CD4-positive, alpha-beta T cell (primary cell): ENCODE measurements at regions of chr4 and their contacts with region 1.

Region 1: GRCh38 chr4:2963175-2963965 is at the starts of genes GRK4 and NOP14:
- DNase-seq: peak; percentile 92 to 99 (median 96)
- ATAC-seq: peak; percentile 89
- H3K4me3 ChIP-seq: peak within 1 kb of the TSS; percentile 87
- H3K4me3 Mint-ChIP-seq: peak within 1 kb of the TSS; percentile 92
- H3K27ac ChIP-seq: peak within 1 kb of the TSS; percentile 88 to 92
- H3K27ac Mint-ChIP-seq: peak within 1 kb of the TSS; percentile 84
- H3K4me1 ChIP-seq: peaks cover 34% of the 10 kb centered on the region
- H3K4me1 Mint-ChIP-seq: peaks cover 42% of the 10 kb centered on the region
- H3K27me3 ChIP-seq: no peaks in the 10 kb centered on the region
- H3K27me3 Mint-ChIP-seq: no peaks in the 10 kb centered on the region
- CTCF ChIP-seq: peak; percentile 62
- total RNA-seq, gene GRK4: 1.2 to 1.8 TPM
- total RNA-seq, gene NOP14: 21.8 TPM

Region 2: GRCh38 chr4:1346781-1347409 is 1616.5 kb before region 1 on chr4 and contains the start of gene UVSSA:
- CTCF ChIA-PET with region 1: no interaction called
- POLR2A ChIA-PET with region 1: no interaction called
- intact Hi-C with region 1: no loop called
- DNase-seq: peak; percentile 100
- ATAC-seq: peak; percentile 87
- H3K4me3 ChIP-seq: peak within 1 kb of the TSS; percentile 77
- H3K4me3 Mint-ChIP-seq: peak within 1 kb of the TSS; percentile 96
- H3K27ac ChIP-seq: peak within 1 kb of the TSS; percentile 84 to 89
- H3K27ac Mint-ChIP-seq: peak within 1 kb of the TSS; percentile 96
- H3K4me1 ChIP-seq: peaks cover 40% of the 10 kb centered on the region
- H3K4me1 Mint-ChIP-seq: peaks cover 60% of the 10 kb centered on the region
- H3K27me3 ChIP-seq: no peaks in the 10 kb centered on the region
- H3K27me3 Mint-ChIP-seq: no peaks in the 10 kb centered on the region
- CTCF ChIP-seq: no peak
- total RNA-seq, gene UVSSA: 31.1 to 33.1 TPM

Region 3: GRCh38 chr4:2008875-2009703 is 954.3 kb before region 1 on chr4 and contains the start of gene NELFA:
- CTCF ChIA-PET with region 1: no interaction called
- POLR2A ChIA-PET with region 1: no interaction called
- intact Hi-C with region 1: loop called in 1 of 2 experiments (anchors 5 kb)
- DNase-seq: peak; percentile 93 to 98 (median 95)
- ATAC-seq: peak; percentile 79
- H3K4me3 ChIP-seq: peak within 1 kb of the TSS; percentile 87
- H3K4me3 Mint-ChIP-seq: peak within 1 kb of the TSS; percentile 98
- H3K27ac ChIP-seq: peak within 1 kb of the TSS; percentile 97 to 99
- H3K27ac Mint-ChIP-seq: peak within 1 kb of the TSS; percentile 95
- H3K4me1 ChIP-seq: peaks cover 31% of the 10 kb centered on the region
- H3K4me1 Mint-ChIP-seq: peaks cover 39% of the 10 kb centered on the region
- H3K27me3 ChIP-seq: no peaks in the 10 kb centered on the region
- H3K27me3 Mint-ChIP-seq: no peaks in the 10 kb centered on the region
- CTCF ChIP-seq: no peak
- total RNA-seq, gene NELFA: 39.9 to 40.1 TPM

Region 4: GRCh38 chr4:2755837-2756694 is 207.3 kb before region 1 on chr4 and contains the start of gene TNIP2:
- CTCF ChIA-PET with region 1: interaction called, 3 read pairs
- POLR2A ChIA-PET with region 1: interaction called, 4 read pairs
- intact Hi-C with region 1: loop called (anchors 2 kb)
- DNase-seq: peak; percentile 63 to 91 (median 76)
- ATAC-seq: peak; percentile 78
- H3K4me3 ChIP-seq: peak within 1 kb of the TSS; percentile 68
- H3K4me3 Mint-ChIP-seq: peak within 1 kb of the TSS; percentile 90
- H3K27ac ChIP-seq: peak within 1 kb of the TSS; percentile 29 to 56
- H3K27ac Mint-ChIP-seq: peak within 1 kb of the TSS; percentile 73
- H3K4me1 ChIP-seq: peaks cover 33% of the 10 kb centered on the region
- H3K4me1 Mint-ChIP-seq: peaks cover 31% of the 10 kb centered on the region
- H3K27me3 ChIP-seq: no peaks in the 10 kb centered on the region
- H3K27me3 Mint-ChIP-seq: no peaks in the 10 kb centered on the region
- CTCF ChIP-seq: no peak
- total RNA-seq, gene TNIP2: 43.8 to 49.1 TPM

Region 5: GRCh38 chr4:2843263-2843940 is 120.0 kb before region 1 on chr4 and contains the start of gene ADD1:
- CTCF ChIA-PET with region 1: no interaction called
- POLR2A ChIA-PET with region 1: interaction called, 4 read pairs
- intact Hi-C with region 1: loop called in 1 of 2 experiments (anchors 1 kb)
- DNase-seq: peak; percentile 82 to 100 (median 92)
- ATAC-seq: peak; percentile 93
- H3K4me3 ChIP-seq: peak within 1 kb of the TSS; percentile 97
- H3K4me3 Mint-ChIP-seq: peak within 1 kb of the TSS; percentile 98
- H3K27ac ChIP-seq: peak within 1 kb of the TSS; percentile 66 to 85
- H3K27ac Mint-ChIP-seq: peak within 1 kb of the TSS; percentile 92
- H3K4me1 ChIP-seq: peaks cover 49% of the 10 kb centered on the region
- H3K4me1 Mint-ChIP-seq: peaks cover 63% of the 10 kb centered on the region
- H3K27me3 ChIP-seq: no peaks in the 10 kb centered on the region
- H3K27me3 Mint-ChIP-seq: no peaks in the 10 kb centered on the region
- CTCF ChIP-seq: no peak
- total RNA-seq, gene ADD1: 153 TPM

Region 6: DNA sequence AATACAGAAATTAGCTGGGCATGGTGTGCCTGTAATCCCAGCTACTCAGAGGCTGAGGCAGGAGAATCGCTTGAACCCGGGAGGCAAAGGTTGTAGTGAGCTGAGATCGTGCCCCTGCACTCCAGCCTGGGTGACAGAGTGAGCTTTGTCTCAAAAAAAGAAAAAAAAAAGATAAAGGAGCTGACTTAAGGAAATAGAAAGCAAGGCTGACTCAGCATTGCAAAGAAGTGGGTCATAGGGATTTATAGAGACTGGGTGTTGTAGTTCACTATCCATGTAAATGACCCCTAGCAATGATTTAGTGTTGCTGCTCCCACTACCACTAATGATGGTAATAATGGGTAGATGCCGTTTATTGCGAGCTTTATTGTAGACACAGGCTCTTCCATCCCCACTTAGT is 72.1 kb before region 1 on chr4:
- CTCF ChIA-PET with region 1: no interaction called
- POLR2A ChIA-PET with region 1: no interaction called
- intact Hi-C with region 1: no loop called
- DNase-seq: no peak
- ATAC-seq: no peak
- H3K4me3 ChIP-seq: no peak overlapping the region
- H3K4me3 Mint-ChIP-seq: no peak overlapping the region
- H3K27ac ChIP-seq: no peak overlapping the region
- H3K27ac Mint-ChIP-seq: peak overlapping the region; percentile 29
- H3K4me1 ChIP-seq: no peaks in the 10 kb centered on the region
- H3K4me1 Mint-ChIP-seq: peaks cover 5% of the 10 kb centered on the region
- H3K27me3 ChIP-seq: no peaks in the 10 kb centered on the region
- H3K27me3 Mint-ChIP-seq: no peaks in the 10 kb centered on the region
- CTCF ChIP-seq: no peak

Region 7: DNA sequence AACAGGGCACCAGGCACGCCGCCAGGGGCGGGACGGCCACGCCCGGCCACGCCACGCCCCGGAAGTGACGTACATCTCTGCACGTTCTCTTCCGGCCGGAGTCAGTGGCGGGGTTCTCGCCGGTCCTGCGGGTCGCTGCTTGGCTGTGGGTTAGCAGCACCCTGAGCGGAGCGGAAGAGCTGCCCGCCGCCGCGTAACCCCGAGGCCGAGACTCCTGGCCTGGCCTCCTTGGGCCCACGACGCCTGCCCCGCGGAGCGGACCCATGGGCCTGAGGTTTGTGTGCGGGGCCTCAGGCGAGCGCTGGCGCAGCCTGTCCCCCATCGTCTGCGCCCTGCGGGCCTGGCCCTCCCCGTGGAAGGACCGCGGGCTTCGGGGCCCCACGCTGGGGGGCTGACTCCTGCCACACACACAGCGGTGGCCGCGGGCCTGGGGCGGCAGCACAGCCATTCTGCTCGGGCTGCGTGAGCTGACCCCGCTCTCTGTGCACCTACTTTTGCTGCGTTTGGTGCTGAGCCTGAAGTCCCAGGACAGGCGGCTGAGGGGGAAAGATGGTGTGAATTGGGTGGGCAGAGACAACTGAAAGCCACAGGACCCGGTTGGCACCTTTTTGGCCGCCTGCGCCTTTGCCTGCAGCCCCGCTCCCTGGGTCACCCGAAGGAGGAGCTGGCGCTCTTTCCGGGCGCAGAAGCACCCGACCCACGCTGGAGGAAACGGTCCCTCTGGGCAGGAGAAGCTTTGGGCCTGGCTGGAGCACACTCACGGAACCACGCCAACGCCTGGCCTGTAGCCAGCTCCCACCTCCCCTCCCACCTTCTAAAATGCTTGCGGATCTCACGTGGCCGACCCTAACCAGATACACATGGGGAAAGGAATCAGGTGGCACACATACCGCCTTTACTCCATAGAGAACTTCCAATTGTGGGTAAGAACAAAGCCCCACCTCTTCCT is 28.3 kb before region 1 on chr4:
- CTCF ChIA-PET with region 1: interaction called, 4 read pairs
- POLR2A ChIA-PET with region 1: interaction called, 51 read pairs
- intact Hi-C with region 1: loop called (anchors 1 to 2 kb)
- DNase-seq: peak; percentile 93 to 99 (median 96)
- ATAC-seq: peak; percentile 58
- H3K4me3 ChIP-seq: peak overlapping the region; percentile 92
- H3K4me3 Mint-ChIP-seq: peak overlapping the region; percentile 93
- H3K27ac ChIP-seq: peak overlapping the region; percentile 82 to 87
- H3K27ac Mint-ChIP-seq: peak overlapping the region; percentile 94
- H3K4me1 ChIP-seq: peaks cover 71% of the 10 kb centered on the region
- H3K4me1 Mint-ChIP-seq: peaks cover 45% of the 10 kb centered on the region
- H3K27me3 ChIP-seq: no peaks in the 10 kb centered on the region
- H3K27me3 Mint-ChIP-seq: no peaks in the 10 kb centered on the region
- CTCF ChIP-seq: no peak

Region 8: GRCh38 chr4:3074078-3074795 is 110.9 kb after region 1 on chr4 and contains the starts of genes HTT and HTT-AS:
- CTCF ChIA-PET with region 1: no interaction called
- POLR2A ChIA-PET with region 1: interaction called, 6 read pairs
- intact Hi-C with region 1: loop called in 1 of 2 experiments (anchors 2 kb)
- DNase-seq: peak; percentile 93 to 99 (median 98)
- ATAC-seq: peak; percentile 84
- H3K4me3 ChIP-seq: peak within 1 kb of the TSS; percentile 80
- H3K4me3 Mint-ChIP-seq: peak within 1 kb of the TSS; percentile 92
- H3K27ac ChIP-seq: peak within 1 kb of the TSS; percentile 72 to 87
- H3K27ac Mint-ChIP-seq: peak within 1 kb of the TSS; percentile 86
- H3K4me1 ChIP-seq: peaks cover 23% of the 10 kb centered on the region
- H3K4me1 Mint-ChIP-seq: peaks cover 26% of the 10 kb centered on the region
- H3K27me3 ChIP-seq: no peaks in the 10 kb centered on the region
- H3K27me3 Mint-ChIP-seq: no peaks in the 10 kb centered on the region
- CTCF ChIP-seq: no peak
- total RNA-seq, gene HTT: 56.9 to 62.6 TPM
- total RNA-seq, gene HTT-AS: not detected

Region 9: GRCh38 chr4:3489451-3489962 is 526.1 kb after region 1 on chr4:
- CTCF ChIA-PET with region 1: no interaction called
- POLR2A ChIA-PET with region 1: no interaction called
- intact Hi-C with region 1: no loop called
- DNase-seq: peak in 1 of 14 experiments; percentile 39
- ATAC-seq: no peak
- H3K4me3 ChIP-seq: no peak overlapping the region
- H3K4me3 Mint-ChIP-seq: no peak overlapping the region
- H3K27ac ChIP-seq: no peak overlapping the region
- H3K27ac Mint-ChIP-seq: no peak overlapping the region
- H3K4me1 ChIP-seq: peaks cover 11% of the 10 kb centered on the region
- H3K4me1 Mint-ChIP-seq: no peaks in the 10 kb centered on the region
- H3K27me3 ChIP-seq: peaks cover 25 to 42% of the 10 kb centered on the region in 2 experiments
- H3K27me3 Mint-ChIP-seq: peaks cover 32% of the 10 kb centered on the region
- CTCF ChIP-seq: no peak

Region 10: DNA sequence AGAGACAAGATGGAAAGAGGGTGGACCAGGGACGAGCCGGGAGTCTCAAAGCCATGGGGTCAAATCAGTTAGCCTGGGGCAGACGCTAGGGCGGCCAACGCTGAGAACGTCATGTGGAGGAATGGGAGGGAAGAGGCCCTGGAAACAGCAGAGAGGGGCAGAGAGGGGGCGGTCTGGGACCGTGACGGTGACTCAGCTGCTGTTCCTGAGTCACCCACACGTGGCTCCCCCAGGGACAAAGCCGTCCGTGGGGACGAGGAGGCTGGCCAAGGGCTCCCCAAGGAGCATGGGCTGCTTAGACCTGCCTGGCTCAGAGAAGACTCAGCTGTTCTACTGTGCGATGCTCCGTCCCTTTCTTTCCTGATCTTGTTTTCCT is 677.2 kb after region 1 on chr4:
- CTCF ChIA-PET with region 1: no interaction called
- POLR2A ChIA-PET with region 1: no interaction called
- intact Hi-C with region 1: no loop called
- DNase-seq: no peak
- ATAC-seq: no peak
- H3K4me3 ChIP-seq: no peak overlapping the region
- H3K4me3 Mint-ChIP-seq: no peak overlapping the region
- H3K27ac ChIP-seq: no peak overlapping the region
- H3K27ac Mint-ChIP-seq: no peak overlapping the region
- H3K4me1 ChIP-seq: no peaks in the 10 kb centered on the region
- H3K4me1 Mint-ChIP-seq: no peaks in the 10 kb centered on the region
- H3K27me3 ChIP-seq: no peaks in the 10 kb centered on the region
- H3K27me3 Mint-ChIP-seq: no peaks in the 10 kb centered on the region
- CTCF ChIP-seq: no peak